ENCODE measurements at regions of chr6 and their contacts with region 1.

Region 1: DNA sequence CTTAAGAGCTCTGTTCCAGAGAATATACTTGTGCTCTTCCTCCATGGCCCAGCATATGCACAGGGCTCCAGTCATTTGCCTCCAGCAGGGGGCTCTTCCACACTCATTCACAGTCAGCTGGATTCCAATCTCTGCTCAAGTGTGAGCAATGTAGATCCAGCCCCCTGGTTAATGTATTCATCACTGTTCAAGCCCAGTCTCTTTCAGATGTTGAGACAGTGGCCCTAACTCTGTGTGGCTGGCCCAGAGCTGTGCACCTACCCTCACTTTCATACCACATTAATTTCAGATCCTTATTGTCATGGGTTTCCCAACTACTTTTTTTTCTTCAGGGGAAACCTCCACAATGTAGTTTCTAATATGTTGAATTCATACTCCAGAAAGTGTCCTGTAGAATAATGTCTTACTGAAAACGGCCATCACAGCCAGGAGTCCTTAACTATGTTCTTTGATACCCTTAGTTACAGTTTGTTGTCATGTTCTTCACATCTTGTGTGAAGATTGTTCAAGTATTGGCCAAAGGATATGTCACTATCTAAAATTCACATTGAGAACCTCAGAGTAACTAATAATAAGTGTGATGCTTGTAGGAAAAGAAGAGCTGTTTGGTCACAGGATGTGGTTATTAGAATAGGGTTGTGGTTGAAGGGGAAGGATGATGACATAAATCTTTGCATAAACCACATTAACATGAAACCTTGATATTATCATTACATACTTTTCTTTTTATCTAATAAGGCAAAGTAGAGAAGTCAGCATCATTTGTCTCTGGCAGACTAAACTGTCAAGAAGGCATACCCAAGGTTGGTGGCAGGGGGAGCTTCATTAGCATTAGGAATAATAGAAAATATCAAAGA is 14.4 kb upstream of the HLA-DQA1 start:
- DNase-seq: peak; percentile 42
- ATAC-seq: peak; percentile 75
- H3K4me3 Mint-ChIP-seq: peak overlapping the region; percentile 80
- H3K27ac Mint-ChIP-seq: peak overlapping the region; percentile 100
- H3K4me1 Mint-ChIP-seq: peaks cover 75% of the 10 kb centered on the region
- H3K27me3 Mint-ChIP-seq: no peaks in the 10 kb centered on the region
- CTCF ChIP-seq: no peak

Region 2: GRCh38 chr6:31559958-31560696 is 1062.6 kb before region 1 on chr6:
- CTCF ChIA-PET with region 1: no interaction called
- POLR2A ChIA-PET with region 1: no interaction called
- intact Hi-C with region 1: loop called (anchors 10 kb)
- DNase-seq: peak; percentile 52
- ATAC-seq: peak; percentile 67
- H3K4me3 Mint-ChIP-seq: peak overlapping the region; percentile 83
- H3K27ac Mint-ChIP-seq: peak overlapping the region; percentile 94
- H3K4me1 Mint-ChIP-seq: peaks cover 90% of the 10 kb centered on the region
- H3K27me3 Mint-ChIP-seq: no peaks in the 10 kb centered on the region
- CTCF ChIP-seq: no peak

Region 3: GRCh38 chr6:32445321-32445854 is 177.4 kb before region 1 on chr6:
- CTCF ChIA-PET with region 1: no interaction called
- POLR2A ChIA-PET with region 1: interaction called, 80 read pairs
- intact Hi-C with region 1: no loop called
- DNase-seq: no peak
- ATAC-seq: no peak
- H3K4me3 Mint-ChIP-seq: no peak overlapping the region
- H3K27ac Mint-ChIP-seq: peak overlapping the region; percentile 2
- H3K4me1 Mint-ChIP-seq: peaks cover 55% of the 10 kb centered on the region
- H3K27me3 Mint-ChIP-seq: no peaks in the 10 kb centered on the region
- CTCF ChIP-seq: no peak

Region 4: DNA sequence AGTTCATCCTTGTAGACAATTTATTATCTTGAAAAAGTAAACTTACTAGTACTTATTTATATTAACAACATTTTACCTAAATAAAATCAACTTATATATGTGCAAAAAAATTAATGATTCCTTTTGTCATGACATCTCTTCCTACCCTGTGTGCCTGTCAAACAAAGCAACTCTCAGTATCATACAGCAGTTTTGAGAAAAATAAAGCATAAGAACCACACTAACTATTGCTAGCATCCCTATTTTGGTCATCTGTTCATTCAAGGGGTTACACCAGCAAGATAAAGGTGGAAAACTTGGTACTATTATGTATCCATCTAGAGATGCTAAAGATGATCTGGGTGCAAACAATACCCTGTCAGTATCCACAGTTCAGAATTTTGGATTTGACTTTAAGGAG is 25.7 kb before region 1 on chr6:
- CTCF ChIA-PET with region 1: interaction called, 3 read pairs
- POLR2A ChIA-PET with region 1: interaction called, 25 read pairs
- intact Hi-C with region 1: no loop called
- DNase-seq: no peak
- ATAC-seq: no peak
- H3K4me3 Mint-ChIP-seq: no peak overlapping the region
- H3K27ac Mint-ChIP-seq: no peak overlapping the region
- H3K4me1 Mint-ChIP-seq: peaks cover 49% of the 10 kb centered on the region
- H3K27me3 Mint-ChIP-seq: no peaks in the 10 kb centered on the region
- CTCF ChIP-seq: no peak

Region 5: GRCh38 chr6:32637219-32637880 is 14.6 kb after region 1 on chr6 and contains the start of gene HLA-DQA1:
- CTCF ChIA-PET with region 1: interaction called, 3 read pairs
- POLR2A ChIA-PET with region 1: interaction called, 360 read pairs
- intact Hi-C with region 1: loop called (anchors 1 kb)
- DNase-seq: no peak
- ATAC-seq: peak; percentile 85
- H3K4me3 Mint-ChIP-seq: peak within 1 kb of the TSS; percentile 100
- H3K27ac Mint-ChIP-seq: peak within 1 kb of the TSS; percentile 100
- H3K4me1 Mint-ChIP-seq: peaks cover 72% of the 10 kb centered on the region
- H3K27me3 Mint-ChIP-seq: no peaks in the 10 kb centered on the region
- CTCF ChIP-seq: no peak
- total RNA-seq, gene HLA-DQA1: 628 and 664 TPM in 2 replicates

Region 6: GRCh38 chr6:32685603-32686002 is 62.8 kb after region 1 on chr6:
- CTCF ChIA-PET with region 1: interaction called, 5 read pairs
- POLR2A ChIA-PET with region 1: interaction called, 37 read pairs
- intact Hi-C with region 1: loop called (anchors 1 kb)
- DNase-seq: no peak
- ATAC-seq: peak; percentile 70
- H3K4me3 Mint-ChIP-seq: peak overlapping the region; percentile 58
- H3K27ac Mint-ChIP-seq: peak overlapping the region; percentile 93
- H3K4me1 Mint-ChIP-seq: peaks cover 84% of the 10 kb centered on the region
- H3K27me3 Mint-ChIP-seq: no peaks in the 10 kb centered on the region
- CTCF ChIP-seq: no peak

Region 7: GRCh38 chr6:32741031-32741960 is 118.5 kb after region 1 on chr6 and contains the start of gene HLA-DQA2:
- CTCF ChIA-PET with region 1: no interaction called
- POLR2A ChIA-PET with region 1: interaction called, 19 read pairs
- intact Hi-C with region 1: no loop called
- DNase-seq: peak; percentile 41
- ATAC-seq: peak; percentile 99
- H3K4me3 Mint-ChIP-seq: peak within 1 kb of the TSS; percentile 81
- H3K27ac Mint-ChIP-seq: peak within 1 kb of the TSS; percentile 83
- H3K4me1 Mint-ChIP-seq: peaks cover 6% of the 10 kb centered on the region
- H3K27me3 Mint-ChIP-seq: peaks cover 19% of the 10 kb centered on the region
- CTCF ChIP-seq: no peak
- total RNA-seq, gene HLA-DQA2: 231 and 237 TPM in 2 replicates